Esophagus muscularis mucosa (tissue), 4 donors: ENCODE measurements at regions of chr7 and their contacts with region 1.

Region 1: GRCh38 chr7:143240291-143241168 is 18.7 kb downstream of the TAS2R40 start:
- DNase-seq: no peak
- H3K4me3 ChIP-seq: no peak overlapping the region
- H3K27ac ChIP-seq: no peak overlapping the region
- H3K4me1 ChIP-seq: peaks cover 0 to 5% (median 3%) of the 10 kb centered on the region in 4 donors
- H3K27me3 ChIP-seq: no peaks in the 10 kb centered on the region
- CTCF ChIP-seq: peak; percentile 90 to 96 (median 91)
- EP300 ChIP-seq: no peak
- POLR2A ChIP-seq: no peak

Region 2: DNA sequence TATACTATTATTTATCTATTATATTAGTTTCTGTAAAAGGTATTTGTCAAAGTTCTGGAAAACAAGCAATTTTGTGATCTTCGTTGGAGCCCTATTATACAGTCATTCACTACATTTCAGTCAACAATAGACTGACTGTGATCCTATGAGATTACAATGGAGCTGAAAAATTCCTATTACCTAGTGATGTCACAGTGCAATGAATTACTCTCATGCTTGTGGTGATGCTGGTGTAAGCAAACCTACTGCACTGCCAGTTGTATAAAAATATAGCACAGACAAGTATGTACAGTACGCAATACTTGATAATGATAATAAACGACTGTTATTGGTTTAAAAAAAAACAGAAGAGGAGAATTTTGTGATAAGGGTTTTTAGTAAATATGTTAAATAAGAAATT is 167.0 kb before region 1 on chr7:
- intact Hi-C with region 1: no loop called
- DNase-seq: no peak
- H3K4me3 ChIP-seq: no peak overlapping the region
- H3K27ac ChIP-seq: no peak overlapping the region
- H3K4me1 ChIP-seq: no peaks in the 10 kb centered on the region
- H3K27me3 ChIP-seq: no peaks in the 10 kb centered on the region
- CTCF ChIP-seq: no peak
- EP300 ChIP-seq: no peak
- POLR2A ChIP-seq: no peak

Region 3: DNA sequence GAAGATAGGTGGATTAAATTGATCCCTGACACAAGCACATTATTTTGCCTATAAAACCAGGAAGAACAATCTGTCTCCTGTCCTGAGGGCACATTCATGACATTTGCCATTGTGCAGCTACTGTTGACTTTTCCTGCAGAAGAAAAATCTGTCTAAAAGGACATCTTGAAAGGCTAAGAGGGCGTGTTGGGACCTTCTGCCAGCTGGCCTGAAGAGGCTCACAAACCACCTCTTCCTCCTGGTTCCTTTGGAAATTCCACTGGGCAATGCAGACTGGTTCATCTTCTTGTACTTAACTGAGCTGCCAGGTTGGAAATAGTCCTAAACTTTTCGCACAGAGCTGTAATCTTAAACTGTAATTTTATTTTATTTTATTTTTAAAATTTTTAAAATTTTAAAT is 144.4 kb before region 1 on chr7:
- intact Hi-C with region 1: no loop called
- DNase-seq: no peak
- H3K4me3 ChIP-seq: no peak overlapping the region
- H3K27ac ChIP-seq: no peak overlapping the region
- H3K4me1 ChIP-seq: no peaks in the 10 kb centered on the region
- H3K27me3 ChIP-seq: no peaks in the 10 kb centered on the region
- CTCF ChIP-seq: no peak
- EP300 ChIP-seq: no peak
- POLR2A ChIP-seq: no peak

Region 4: GRCh38 chr7:143305423-143306070 is 65.0 kb after region 1 on chr7:
- intact Hi-C with region 1: loop called (anchors 2 kb)
- DNase-seq: no peak
- H3K4me3 ChIP-seq: no peak overlapping the region
- H3K27ac ChIP-seq: no peak overlapping the region
- H3K4me1 ChIP-seq: peaks cover 0 to 9% (median 3%) of the 10 kb centered on the region in 4 donors
- H3K27me3 ChIP-seq: no peaks in the 10 kb centered on the region
- CTCF ChIP-seq: peak; percentile 55 to 70 (median 60)
- EP300 ChIP-seq: no peak
- POLR2A ChIP-seq: no peak